H1 (cell line): ENCODE measurements at regions of chr2 and their contacts with region 1.

Region 1: GRCh38 chr2:85420536-85421259 is 2.2 kb downstream of the SH2D6 start:
- DNase-seq: peak in 1 of 2 experiments; percentile 100
- H3K4me3 ChIP-seq: no peak overlapping the region
- H3K27ac ChIP-seq: no peak overlapping the region
- H3K4me1 ChIP-seq: peaks cover 0 to 20% (median 13%) of the 10 kb centered on the region in 4 experiments; a peak in 6 of 7 replicates
- H3K27me3 ChIP-seq: no peaks in the 10 kb centered on the region; a peak in 1 of 7 replicates
- CTCF ChIP-seq: peak; percentile 96 to 100 (median 98)
- EP300 ChIP-seq: peak in 1 of 2 experiments; percentile 24; a peak in 1 of 3 replicates
- POLR2A ChIP-seq: no peak
- RAD21 ChIP-seq: peak; percentile 99 to 100

Region 2: DNA sequence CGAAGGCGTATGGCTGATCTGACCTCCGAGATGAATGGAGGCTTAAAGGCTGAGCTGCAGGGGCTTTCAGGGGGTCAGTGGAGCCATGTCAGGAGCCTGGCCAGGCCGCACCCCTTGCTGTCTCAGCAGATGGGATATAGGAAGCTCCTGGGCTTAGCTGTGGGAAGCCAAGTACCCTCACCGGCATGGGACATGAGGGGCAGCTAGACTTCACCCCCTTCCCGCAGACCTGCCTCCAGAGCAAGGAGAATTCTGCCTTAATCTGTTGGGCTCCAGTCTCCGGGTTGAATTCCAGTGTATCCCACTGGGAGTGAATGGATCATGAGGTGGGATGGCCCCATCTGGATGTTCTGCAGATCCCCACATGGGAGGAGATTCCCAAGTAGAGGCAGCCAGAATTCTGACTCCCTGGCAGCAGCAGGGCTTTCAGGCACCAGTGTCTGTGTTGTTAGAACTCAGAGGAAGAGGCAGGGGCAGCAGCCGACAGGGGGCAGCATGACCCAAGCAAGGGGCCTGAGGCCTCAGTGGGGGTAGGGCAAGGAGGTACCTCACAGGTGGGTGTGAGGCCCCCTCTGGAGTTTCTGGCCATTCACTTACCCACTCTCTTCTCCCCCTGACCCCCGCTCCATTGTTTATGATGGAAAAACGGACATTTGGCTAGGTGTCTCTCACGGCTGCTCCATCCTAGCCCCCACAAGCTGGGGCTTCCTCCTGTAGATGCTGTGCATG is 29.6 kb before region 1 on chr2:
- CTCF ChIA-PET with region 1: interaction called, 59 read pairs
- POLR2A ChIA-PET with region 1: interaction called, 5 read pairs
- DNase-seq: peak; percentile 36 to 97
- H3K4me3 ChIP-seq: no peak overlapping the region
- H3K27ac ChIP-seq: no peak overlapping the region
- H3K4me1 ChIP-seq: peaks cover 0 to 6% (median 3%) of the 10 kb centered on the region in 4 experiments; a peak in 4 of 7 replicates
- H3K27me3 ChIP-seq: no peaks in the 10 kb centered on the region; a peak in 1 of 7 replicates
- CTCF ChIP-seq: peak; percentile 89 to 94 (median 94)
- EP300 ChIP-seq: no peak
- POLR2A ChIP-seq: no peak
- RAD21 ChIP-seq: peak; percentile 95 to 97

Region 3: GRCh38 chr2:85430752-85431569 is 10.3 kb after region 1 on chr2:
- CTCF ChIA-PET with region 1: interaction called, 21 read pairs
- POLR2A ChIA-PET with region 1: interaction called, 47 read pairs
- DNase-seq: peak in 1 of 2 experiments; percentile 91
- H3K4me3 ChIP-seq: peak overlapping the region; percentile 20 to 55 (median 24); a peak in 5 of 8 replicates
- H3K27ac ChIP-seq: peak overlapping the region; percentile 83; the same call in 1 of the 2 replicates
- H3K4me1 ChIP-seq: peaks cover 0 to 50% (median 36%) of the 10 kb centered on the region in 4 experiments; a peak in 6 of 7 replicates
- H3K27me3 ChIP-seq: peaks cover 0 to 6% (median 4%) of the 10 kb centered on the region in 4 experiments; a peak in 3 of 7 replicates
- CTCF ChIP-seq: no peak
- EP300 ChIP-seq: peak; percentile 18 to 60; a peak in 2 of 3 replicates
- POLR2A ChIP-seq: no peak
- RAD21 ChIP-seq: no peak

Region 4: GRCh38 chr2:85445316-85446295 is 24.9 kb after region 1 on chr2:
- CTCF ChIA-PET with region 1: interaction called, 19 read pairs
- POLR2A ChIA-PET with region 1: interaction called, 10 read pairs
- DNase-seq: no peak
- H3K4me3 ChIP-seq: no peak overlapping the region
- H3K27ac ChIP-seq: no peak overlapping the region
- H3K4me1 ChIP-seq: peaks cover 0 to 5% (median 1%) of the 10 kb centered on the region in 4 experiments; a peak in 3 of 7 replicates
- H3K27me3 ChIP-seq: no peaks in the 10 kb centered on the region
- CTCF ChIP-seq: no peak
- EP300 ChIP-seq: no peak
- POLR2A ChIP-seq: no peak
- RAD21 ChIP-seq: no peak

Region 5: GRCh38 chr2:85516653-85517406 is 96.1 kb after region 1 on chr2:
- CTCF ChIA-PET with region 1: interaction called, 11 read pairs
- POLR2A ChIA-PET with region 1: interaction called, 3 read pairs
- DNase-seq: no peak
- H3K4me3 ChIP-seq: no peak overlapping the region
- H3K27ac ChIP-seq: no peak overlapping the region
- H3K4me1 ChIP-seq: no peaks in the 10 kb centered on the region
- H3K27me3 ChIP-seq: no peaks in the 10 kb centered on the region; a peak in 1 of 7 replicates
- CTCF ChIP-seq: no peak
- EP300 ChIP-seq: no peak
- POLR2A ChIP-seq: no peak
- RAD21 ChIP-seq: no peak

Region 6: GRCh38 chr2:85551698-85552678 is 131.3 kb after region 1 on chr2:
- CTCF ChIA-PET with region 1: interaction called, 259 read pairs
- POLR2A ChIA-PET with region 1: interaction called, 1,889 read pairs
- DNase-seq: peak; percentile 60 to 93
- H3K4me3 ChIP-seq: no peak overlapping the region
- H3K27ac ChIP-seq: no peak overlapping the region
- H3K4me1 ChIP-seq: no peaks in the 10 kb centered on the region
- H3K27me3 ChIP-seq: no peaks in the 10 kb centered on the region
- CTCF ChIP-seq: peak; percentile 70 to 93 (median 93)
- EP300 ChIP-seq: no peak
- POLR2A ChIP-seq: no peak
- RAD21 ChIP-seq: peak; percentile 98